ENCODE measurements at regions of chr2 and their contacts with region 1.

Region 1: GRCh38 chr2:72745679-72746368 is 80.0 kb downstream of the EXOC6B start:
- DNase-seq: no peak
- ATAC-seq: no peak
- H3K4me3 Mint-ChIP-seq: no peak overlapping the region
- H3K27ac Mint-ChIP-seq: no peak overlapping the region
- H3K4me1 Mint-ChIP-seq: no peaks in the 10 kb centered on the region
- H3K27me3 Mint-ChIP-seq: no peaks in the 10 kb centered on the region

Region 2: GRCh38 chr2:71923887-71924533 is 821.8 kb before region 1 on chr2:
- CTCF ChIA-PET with region 1: interaction called, 6 read pairs
- POLR2A ChIA-PET with region 1: no interaction called
- intact Hi-C with region 1: loop called (anchors 1 to 5 kb)
- DNase-seq: peak; percentile 77
- ATAC-seq: peak; percentile 63
- H3K4me3 Mint-ChIP-seq: no peak overlapping the region
- H3K27ac Mint-ChIP-seq: no peak overlapping the region
- H3K4me1 Mint-ChIP-seq: no peaks in the 10 kb centered on the region
- H3K27me3 Mint-ChIP-seq: no peaks in the 10 kb centered on the region

Region 3: DNA sequence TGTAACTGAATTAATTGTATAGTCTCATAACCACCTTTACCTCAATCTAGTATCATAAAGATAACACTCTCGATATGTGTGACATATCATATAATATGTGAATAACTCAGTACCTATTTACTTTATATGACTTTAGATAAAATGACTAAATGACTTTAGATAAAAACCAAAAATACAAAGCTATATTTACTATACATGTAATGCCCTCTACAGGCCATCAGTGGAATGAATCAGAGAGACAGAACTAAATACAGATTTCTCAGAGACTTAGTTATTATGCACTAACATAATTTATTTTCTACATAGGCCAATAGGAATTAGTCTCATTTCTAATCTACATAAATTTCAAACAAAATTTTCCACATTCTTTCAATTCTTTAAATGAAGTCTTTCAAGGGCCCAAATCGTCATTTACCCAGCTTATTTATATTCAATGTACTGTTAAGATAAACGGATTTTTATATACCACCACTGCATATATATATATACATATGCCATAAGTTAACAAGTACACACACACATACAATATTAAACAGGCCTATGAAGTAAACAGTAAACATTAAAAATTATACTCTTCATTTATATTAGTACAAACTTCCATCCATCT is 139.9 kb before region 1 on chr2:
- CTCF ChIA-PET with region 1: no interaction called
- POLR2A ChIA-PET with region 1: no interaction called
- intact Hi-C with region 1: loop called in 1 of 2 experiments (anchors 10 kb)
- DNase-seq: no peak
- ATAC-seq: no peak
- H3K4me3 Mint-ChIP-seq: no peak overlapping the region
- H3K27ac Mint-ChIP-seq: no peak overlapping the region
- H3K4me1 Mint-ChIP-seq: peaks cover 17% of the 10 kb centered on the region
- H3K27me3 Mint-ChIP-seq: no peaks in the 10 kb centered on the region

Measured in activated CD4-positive, alpha-beta T cell treated with anti-CD3 and anti-CD28 coated beads for 36 hours (primary cell).